CD4-positive, alpha-beta memory T cell (primary cell): ENCODE measurements at regions of chr1 and their contacts with region 1.

Region 1: DNA sequence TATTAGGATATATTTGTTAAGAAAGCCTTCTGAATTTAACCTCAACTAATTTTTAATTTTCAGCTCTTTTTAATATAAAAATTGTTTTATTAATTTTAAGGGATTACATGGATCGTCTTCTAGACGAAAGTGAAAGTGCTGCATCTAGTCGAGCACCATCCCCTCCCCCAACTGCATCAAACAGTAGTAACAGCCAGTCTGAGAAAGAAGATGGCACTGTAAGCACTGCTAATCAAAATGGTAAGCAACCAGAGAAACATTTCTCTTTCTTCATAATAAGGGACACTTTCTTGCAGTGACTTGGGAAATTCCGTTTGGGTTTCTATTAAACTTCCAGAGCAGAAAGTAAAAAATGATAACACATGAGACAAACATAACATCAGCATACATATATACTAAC is 56.9 kb downstream of the MIER1 start:
- DNase-seq: peak; percentile 55 to 72 (median 67)
- H3K4me3 ChIP-seq: peak overlapping the region in 1 of 2 donors; percentile 9
- H3K4me3 Mint-ChIP-seq: peak overlapping the region; percentile 2 to 80 (median 72)
- H3K27ac ChIP-seq: peak overlapping the region; percentile 61
- H3K27ac Mint-ChIP-seq: peak overlapping the region; percentile 53 to 94 (median 77)
- H3K4me1 ChIP-seq: peaks cover 25% of the 10 kb centered on the region
- H3K4me1 Mint-ChIP-seq: peaks cover 20 to 37% (median 22%) of the 10 kb centered on the region in 4 donors
- H3K27me3 ChIP-seq: no peaks in the 10 kb centered on the region
- H3K27me3 Mint-ChIP-seq: no peaks in the 10 kb centered on the region

Region 2: GRCh38 chr1:66764994-66765578 is 216.6 kb before region 1 on chr1:
- CTCF ChIA-PET with region 1: interaction called, 5 read pairs
- POLR2A ChIA-PET with region 1: no interaction called
- intact Hi-C with region 1: loop called (anchors 5 kb)
- DNase-seq: peak; percentile 53 to 59 (median 54)
- H3K4me3 ChIP-seq: no peak overlapping the region
- H3K4me3 Mint-ChIP-seq: no peak overlapping the region
- H3K27ac ChIP-seq: no peak overlapping the region
- H3K27ac Mint-ChIP-seq: no peak overlapping the region
- H3K4me1 ChIP-seq: peaks cover 13% of the 10 kb centered on the region
- H3K4me1 Mint-ChIP-seq: peaks cover 13 to 17% (median 15%) of the 10 kb centered on the region in 4 donors
- H3K27me3 ChIP-seq: no peaks in the 10 kb centered on the region
- H3K27me3 Mint-ChIP-seq: no peaks in the 10 kb centered on the region

Region 3: GRCh38 chr1:66824771-66825170 is 156.9 kb before region 1 on chr1:
- CTCF ChIA-PET with region 1: no interaction called
- POLR2A ChIA-PET with region 1: no interaction called
- intact Hi-C with region 1: no loop called
- DNase-seq: no peak
- H3K4me3 ChIP-seq: no peak overlapping the region
- H3K4me3 Mint-ChIP-seq: no peak overlapping the region
- H3K27ac ChIP-seq: no peak overlapping the region
- H3K27ac Mint-ChIP-seq: no peak overlapping the region
- H3K4me1 ChIP-seq: no peaks in the 10 kb centered on the region
- H3K4me1 Mint-ChIP-seq: no peaks in the 10 kb centered on the region
- H3K27me3 ChIP-seq: no peaks in the 10 kb centered on the region
- H3K27me3 Mint-ChIP-seq: no peaks in the 10 kb centered on the region

Region 4: DNA sequence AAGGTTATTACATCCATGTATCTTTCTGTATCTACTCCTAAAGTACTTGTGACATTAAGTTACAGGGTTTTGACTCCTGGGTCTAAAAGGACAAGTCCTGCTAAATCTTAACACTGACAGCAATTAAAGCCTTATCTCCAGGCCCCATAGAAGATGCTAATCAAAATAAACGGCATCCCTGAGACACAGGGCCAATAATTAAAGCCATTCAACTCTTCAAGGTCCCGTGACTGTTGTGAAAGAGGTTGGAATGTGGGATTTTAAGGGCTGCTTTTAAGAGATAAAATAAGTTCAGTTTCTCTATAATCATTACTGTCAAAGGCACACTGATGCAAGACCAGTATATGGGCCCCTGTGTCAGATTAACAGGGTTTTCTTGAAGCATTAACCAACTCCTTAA is 65.4 kb before region 1 on chr1:
- CTCF ChIA-PET with region 1: no interaction called
- POLR2A ChIA-PET with region 1: no interaction called
- intact Hi-C with region 1: no loop called
- DNase-seq: no peak
- H3K4me3 ChIP-seq: no peak overlapping the region
- H3K4me3 Mint-ChIP-seq: no peak overlapping the region
- H3K27ac ChIP-seq: no peak overlapping the region
- H3K27ac Mint-ChIP-seq: peak overlapping the region in 1 of 7 donors; percentile 31
- H3K4me1 ChIP-seq: no peaks in the 10 kb centered on the region
- H3K4me1 Mint-ChIP-seq: peaks cover 0 to 5% (median 0%) of the 10 kb centered on the region in 4 donors
- H3K27me3 ChIP-seq: no peaks in the 10 kb centered on the region
- H3K27me3 Mint-ChIP-seq: peaks cover 0 to 1% of the 10 kb centered on the region in 2 donors

Region 5: DNA sequence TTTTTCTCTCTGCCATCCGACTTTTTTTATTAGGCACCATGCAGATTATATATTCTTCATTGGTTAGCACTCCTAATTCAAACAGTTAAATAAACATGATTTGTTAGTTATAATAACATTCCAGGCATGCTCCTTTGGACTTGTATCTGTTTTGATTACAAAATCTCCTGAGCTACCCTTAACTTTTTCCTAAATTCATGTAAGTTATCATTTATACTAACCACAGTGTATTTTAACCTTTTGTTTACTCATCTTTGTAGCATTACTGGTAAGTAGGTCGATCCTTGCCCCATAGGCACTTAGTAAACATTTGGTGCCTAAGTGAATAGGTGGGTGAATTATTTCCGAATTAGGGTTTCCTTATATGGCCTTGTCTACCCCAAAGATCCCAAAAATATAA is 13.1 kb before region 1 on chr1:
- CTCF ChIA-PET with region 1: no interaction called
- POLR2A ChIA-PET with region 1: interaction called, 4 read pairs
- intact Hi-C with region 1: loop called (anchors 2 kb)
- DNase-seq: no peak
- H3K4me3 ChIP-seq: no peak overlapping the region
- H3K4me3 Mint-ChIP-seq: no peak overlapping the region
- H3K27ac ChIP-seq: no peak overlapping the region
- H3K27ac Mint-ChIP-seq: peak overlapping the region in 4 of 7 donors; percentile 11 to 71 (median 42)
- H3K4me1 ChIP-seq: no peaks in the 10 kb centered on the region
- H3K4me1 Mint-ChIP-seq: peaks cover 19 to 36% (median 27%) of the 10 kb centered on the region in 4 donors
- H3K27me3 ChIP-seq: no peaks in the 10 kb centered on the region
- H3K27me3 Mint-ChIP-seq: no peaks in the 10 kb centered on the region

Region 6: GRCh38 chr1:67535474-67535873 is 553.8 kb after region 1 on chr1:
- CTCF ChIA-PET with region 1: no interaction called
- POLR2A ChIA-PET with region 1: no interaction called
- intact Hi-C with region 1: no loop called
- DNase-seq: peak in 1 of 5 donors; percentile 6
- H3K4me3 ChIP-seq: no peak overlapping the region
- H3K4me3 Mint-ChIP-seq: no peak overlapping the region
- H3K27ac ChIP-seq: no peak overlapping the region
- H3K27ac Mint-ChIP-seq: no peak overlapping the region
- H3K4me1 ChIP-seq: no peaks in the 10 kb centered on the region
- H3K4me1 Mint-ChIP-seq: peaks cover 0 to 2% (median under 1%) of the 10 kb centered on the region in 4 donors
- H3K27me3 ChIP-seq: no peaks in the 10 kb centered on the region
- H3K27me3 Mint-ChIP-seq: peaks cover 0 to 5% of the 10 kb centered on the region in 2 donors